ENCODE measurements at regions of chr1 and their contacts with region 1.

Region 1: GRCh38 chr1:198638894-198639635 is at the start of gene PTPRC:
- DNase-seq: peak in 4 of 5 donors; percentile 50 to 67 (median 60)
- H3K4me3 ChIP-seq: peak within 1 kb of the TSS; percentile 61 to 78
- H3K4me3 Mint-ChIP-seq: peak within 1 kb of the TSS; percentile 82 to 99 (median 94)
- H3K27ac ChIP-seq: peak within 1 kb of the TSS; percentile 83
- H3K27ac Mint-ChIP-seq: peak within 1 kb of the TSS; percentile 86 to 98 (median 95)
- H3K4me1 ChIP-seq: peaks cover 60% of the 10 kb centered on the region
- H3K4me1 Mint-ChIP-seq: peaks cover 34 to 46% (median 39%) of the 10 kb centered on the region in 4 donors
- H3K27me3 ChIP-seq: no peaks in the 10 kb centered on the region
- H3K27me3 Mint-ChIP-seq: no peaks in the 10 kb centered on the region
- total RNA-seq, gene PTPRC: 974 to 987 TPM

Region 2: GRCh38 chr1:198291036-198291435 is 348.0 kb before region 1 on chr1:
- CTCF ChIA-PET with region 1: no interaction called
- POLR2A ChIA-PET with region 1: no interaction called
- intact Hi-C with region 1: no loop called
- DNase-seq: no peak
- H3K4me3 ChIP-seq: no peak overlapping the region
- H3K4me3 Mint-ChIP-seq: no peak overlapping the region
- H3K27ac ChIP-seq: no peak overlapping the region
- H3K27ac Mint-ChIP-seq: peak overlapping the region in 3 of 7 donors; percentile 2 to 33 (median 20)
- H3K4me1 ChIP-seq: no peaks in the 10 kb centered on the region
- H3K4me1 Mint-ChIP-seq: peaks cover 0 to 15% (median 12%) of the 10 kb centered on the region in 4 donors
- H3K27me3 ChIP-seq: no peaks in the 10 kb centered on the region
- H3K27me3 Mint-ChIP-seq: no peaks in the 10 kb centered on the region

Region 3: GRCh38 chr1:198588845-198589244 is 50.2 kb before region 1 on chr1:
- CTCF ChIA-PET with region 1: no interaction called
- POLR2A ChIA-PET with region 1: no interaction called
- intact Hi-C with region 1: no loop called
- DNase-seq: no peak
- H3K4me3 ChIP-seq: no peak overlapping the region
- H3K4me3 Mint-ChIP-seq: peak overlapping the region in 1 of 8 donors; percentile 49
- H3K27ac ChIP-seq: no peak overlapping the region
- H3K27ac Mint-ChIP-seq: no peak overlapping the region
- H3K4me1 ChIP-seq: no peaks in the 10 kb centered on the region
- H3K4me1 Mint-ChIP-seq: peaks cover 0 to 4% (median 0%) of the 10 kb centered on the region in 4 donors
- H3K27me3 ChIP-seq: no peaks in the 10 kb centered on the region
- H3K27me3 Mint-ChIP-seq: no peaks in the 10 kb centered on the region

Region 4: DNA sequence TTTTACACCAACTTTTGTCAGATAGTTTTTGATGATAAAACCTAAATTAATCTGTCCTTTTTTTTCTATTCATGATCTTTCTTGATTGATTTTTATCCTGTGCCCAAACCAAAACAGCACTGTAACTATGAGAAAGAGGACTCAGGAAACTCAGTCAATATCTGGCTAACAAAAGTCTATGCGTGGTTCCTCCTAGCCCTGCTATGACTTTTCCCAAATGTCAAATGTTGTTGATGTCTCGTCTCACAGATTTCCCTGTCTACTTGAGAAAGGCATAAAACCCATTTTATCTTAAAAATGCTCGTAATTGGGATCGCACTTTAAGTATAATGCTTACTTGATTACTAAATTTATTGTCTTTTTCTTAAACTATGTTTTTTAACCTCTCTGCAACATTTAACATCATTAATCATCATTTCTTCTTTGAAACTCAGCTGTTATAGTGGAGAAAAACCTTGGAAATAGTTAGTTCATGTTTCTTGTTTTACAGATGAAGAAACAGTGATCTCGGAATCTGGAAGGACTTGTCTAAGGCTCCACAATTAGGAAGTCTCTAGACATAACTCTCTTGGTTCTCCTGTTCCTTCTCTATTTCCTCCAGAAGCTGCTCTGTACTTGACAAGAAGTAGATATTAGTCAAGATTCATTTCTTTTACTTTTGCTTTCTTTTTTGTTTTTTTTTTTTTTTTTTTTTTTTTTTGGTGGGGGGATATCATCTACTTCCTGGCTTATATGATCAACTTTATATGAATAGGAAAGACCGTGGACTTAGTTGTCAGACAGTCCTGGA is 26.4 kb before region 1 on chr1:
- CTCF ChIA-PET with region 1: interaction called, 4 read pairs
- POLR2A ChIA-PET with region 1: interaction called, 40 read pairs
- intact Hi-C with region 1: loop called (anchors 1 kb)
- DNase-seq: peak in 3 of 5 donors; percentile 36 to 48 (median 43)
- H3K4me3 ChIP-seq: peak overlapping the region; percentile 20 to 23
- H3K4me3 Mint-ChIP-seq: peak overlapping the region; percentile 67 to 92 (median 82)
- H3K27ac ChIP-seq: peak overlapping the region; percentile 81
- H3K27ac Mint-ChIP-seq: peak overlapping the region; percentile 92 to 99 (median 98)
- H3K4me1 ChIP-seq: peaks cover 94% of the 10 kb centered on the region
- H3K4me1 Mint-ChIP-seq: peaks cover 58 to 75% (median 64%) of the 10 kb centered on the region in 4 donors
- H3K27me3 ChIP-seq: no peaks in the 10 kb centered on the region
- H3K27me3 Mint-ChIP-seq: no peaks in the 10 kb centered on the region

Region 5: DNA sequence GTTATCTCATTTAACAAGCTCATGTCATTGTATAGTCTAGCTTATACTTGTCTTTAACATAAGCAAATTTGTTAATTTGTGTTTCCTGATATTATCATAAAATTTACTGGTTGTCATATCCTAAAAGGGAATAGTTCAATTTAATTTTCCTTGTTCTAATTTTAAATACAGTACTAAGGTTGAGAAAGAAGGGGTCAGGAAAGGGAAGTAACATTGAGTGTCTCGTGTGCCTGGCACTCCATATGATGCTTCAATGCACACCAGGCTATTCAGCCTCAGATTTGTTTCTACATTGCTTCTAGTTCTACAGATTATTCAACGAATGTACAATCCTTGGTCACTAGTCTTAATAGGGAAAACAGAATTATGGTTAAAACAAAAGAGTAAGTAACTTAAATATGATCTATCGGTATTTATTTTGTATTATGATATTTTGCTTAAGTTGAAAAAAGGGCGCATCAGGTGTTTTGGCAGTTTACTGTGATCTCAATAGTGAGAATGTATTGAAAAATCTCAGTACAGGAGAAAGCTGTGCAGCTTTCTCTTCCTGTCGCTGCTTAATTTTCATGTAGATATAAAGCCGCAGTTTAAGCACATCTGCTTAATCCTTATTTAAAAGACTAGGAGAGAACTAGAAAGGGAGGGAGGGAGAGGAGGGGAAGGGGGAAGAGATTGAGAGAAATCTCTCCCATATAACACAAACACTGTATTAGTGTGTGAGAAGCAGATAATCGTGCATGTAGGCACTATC is 12.8 kb after region 1 on chr1:
- CTCF ChIA-PET with region 1: interaction called, 4 read pairs
- POLR2A ChIA-PET with region 1: interaction called, 75 read pairs
- intact Hi-C with region 1: loop called (anchors 1 kb)
- DNase-seq: no peak
- H3K4me3 ChIP-seq: peak overlapping the region; percentile 12 to 39
- H3K4me3 Mint-ChIP-seq: peak overlapping the region; percentile 70 to 88 (median 78)
- H3K27ac ChIP-seq: peak overlapping the region; percentile 73
- H3K27ac Mint-ChIP-seq: peak overlapping the region; percentile 94 to 98 (median 96)
- H3K4me1 ChIP-seq: peaks cover 91% of the 10 kb centered on the region
- H3K4me1 Mint-ChIP-seq: peaks cover 49 to 73% (median 64%) of the 10 kb centered on the region in 4 donors
- H3K27me3 ChIP-seq: no peaks in the 10 kb centered on the region
- H3K27me3 Mint-ChIP-seq: no peaks in the 10 kb centered on the region

Region 6: GRCh38 chr1:198662821-198663220 is 23.8 kb after region 1 on chr1:
- CTCF ChIA-PET with region 1: interaction called, 3 read pairs
- POLR2A ChIA-PET with region 1: interaction called, 427 read pairs
- intact Hi-C with region 1: no loop called
- DNase-seq: no peak
- H3K4me3 ChIP-seq: peak overlapping the region; percentile 20 to 24
- H3K4me3 Mint-ChIP-seq: peak overlapping the region; percentile 75 to 85 (median 80)
- H3K27ac ChIP-seq: peak overlapping the region; percentile 69
- H3K27ac Mint-ChIP-seq: peak overlapping the region; percentile 88 to 96 (median 93)
- H3K4me1 ChIP-seq: peaks cover 95% of the 10 kb centered on the region
- H3K4me1 Mint-ChIP-seq: peaks cover 66 to 82% (median 76%) of the 10 kb centered on the region in 4 donors
- H3K27me3 ChIP-seq: no peaks in the 10 kb centered on the region
- H3K27me3 Mint-ChIP-seq: no peaks in the 10 kb centered on the region

Region 7: DNA sequence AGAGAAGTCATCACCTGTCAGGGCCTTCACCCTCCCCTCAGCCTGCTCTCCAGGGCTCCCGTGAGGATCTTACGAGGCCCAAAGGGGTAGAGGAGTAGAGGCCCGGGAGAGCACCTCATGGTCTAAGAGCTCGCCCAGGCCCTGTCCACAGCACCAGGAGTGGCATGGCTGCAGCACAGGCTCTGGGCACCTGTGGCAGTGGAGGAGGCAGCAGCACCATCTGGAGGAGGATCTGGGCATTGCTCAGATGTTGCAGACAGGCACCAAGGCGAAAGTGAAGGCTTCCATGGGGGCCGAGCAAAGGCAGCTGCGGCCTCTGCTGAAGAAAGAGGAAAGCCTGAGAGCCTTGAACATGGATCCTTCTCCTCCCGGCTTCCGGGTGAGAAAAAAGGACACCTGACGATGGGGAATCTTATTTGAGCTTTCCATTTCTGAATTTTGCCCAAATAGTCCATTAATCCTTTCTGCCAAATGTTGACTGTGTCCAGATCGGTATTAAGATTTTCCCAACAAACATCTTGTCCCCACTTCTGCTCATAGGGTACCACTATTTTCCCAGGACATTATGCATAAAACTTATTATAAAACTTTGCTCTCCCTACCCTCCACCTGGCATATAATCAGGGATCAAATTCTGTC is 604.5 kb after region 1 on chr1:
- CTCF ChIA-PET with region 1: no interaction called
- POLR2A ChIA-PET with region 1: no interaction called
- intact Hi-C with region 1: no loop called
- DNase-seq: peak; percentile 53 to 64 (median 58)
- H3K4me3 ChIP-seq: no peak overlapping the region
- H3K4me3 Mint-ChIP-seq: peak overlapping the region in 1 of 8 donors; percentile 15
- H3K27ac ChIP-seq: no peak overlapping the region
- H3K27ac Mint-ChIP-seq: peak overlapping the region in 1 of 7 donors; percentile 57
- H3K4me1 ChIP-seq: peaks cover 5% of the 10 kb centered on the region
- H3K4me1 Mint-ChIP-seq: peaks cover 0 to 5% (median 2%) of the 10 kb centered on the region in 4 donors
- H3K27me3 ChIP-seq: no peaks in the 10 kb centered on the region
- H3K27me3 Mint-ChIP-seq: peaks cover 0 to 2% of the 10 kb centered on the region in 2 donors